ENCODE measurements at regions of chr22 and their contacts with region 1.

Region 1: GRCh38 chr22:23922651-23923320 is 28.6 kb downstream of the MIF start:
- DNase-seq: no peak
- H3K4me3 ChIP-seq: no peak overlapping the region
- H3K27ac ChIP-seq: no peak overlapping the region
- H3K4me1 ChIP-seq: no peaks in the 10 kb centered on the region
- H3K27me3 ChIP-seq: no peaks in the 10 kb centered on the region
- CTCF ChIP-seq: no peak
- EP300 ChIP-seq: no peak
- POLR2A ChIP-seq: no peak

Region 2: GRCh38 chr22:23655891-23656475 is 266.8 kb before region 1 on chr22:
- in situ Hi-C with region 1: no loop called
- intact Hi-C with region 1: no loop called
- DNase-seq: no peak
- H3K4me3 ChIP-seq: no peak overlapping the region
- H3K27ac ChIP-seq: no peak overlapping the region
- H3K4me1 ChIP-seq: no peaks in the 10 kb centered on the region
- H3K27me3 ChIP-seq: no peaks in the 10 kb centered on the region
- CTCF ChIP-seq: no peak
- EP300 ChIP-seq: no peak
- POLR2A ChIP-seq: no peak

Region 3: GRCh38 chr22:23878219-23878618 is 44.6 kb before region 1 on chr22:
- in situ Hi-C with region 1: no loop called
- intact Hi-C with region 1: no loop called
- DNase-seq: no peak
- H3K4me3 ChIP-seq: no peak overlapping the region
- H3K27ac ChIP-seq: no peak overlapping the region
- H3K4me1 ChIP-seq: no peaks in the 10 kb centered on the region
- H3K27me3 ChIP-seq: no peaks in the 10 kb centered on the region
- CTCF ChIP-seq: no peak
- EP300 ChIP-seq: no peak
- POLR2A ChIP-seq: no peak

Region 4: DNA sequence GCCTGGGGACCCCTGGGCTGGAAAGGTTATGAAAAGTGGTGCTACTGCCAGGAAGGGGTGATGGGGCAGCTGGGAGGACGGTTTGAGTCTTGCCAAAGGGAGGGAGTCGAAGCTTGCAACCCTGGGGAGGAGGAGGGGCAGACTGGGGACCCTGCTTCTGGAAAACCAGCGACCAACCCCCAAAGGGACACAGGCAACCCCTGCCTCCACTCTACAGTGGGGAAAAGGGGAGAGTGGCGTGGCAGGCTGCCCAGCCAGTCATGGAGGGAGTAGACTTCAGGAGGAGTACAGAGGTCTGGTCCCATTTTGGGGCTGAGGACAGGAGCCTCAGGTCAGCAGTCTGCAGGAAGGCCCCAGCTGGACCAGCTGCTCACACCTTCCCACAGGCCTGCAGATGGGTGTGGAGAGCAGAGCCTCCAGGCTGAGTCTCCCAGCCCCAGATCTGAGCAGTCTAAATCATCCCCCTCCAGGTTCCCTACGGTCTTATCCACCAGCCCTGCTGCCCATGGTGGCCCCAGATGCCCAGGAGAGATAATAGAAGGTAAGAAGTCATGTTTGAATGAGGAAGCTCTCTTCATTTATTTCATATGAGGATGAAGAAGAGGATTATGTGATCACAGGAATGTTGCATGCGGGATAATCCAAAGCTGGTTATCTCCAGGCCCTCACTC is 48.2 kb after region 1 on chr22:
- in situ Hi-C with region 1: loop called in 1 of 4 experiments (anchors 10 kb)
- intact Hi-C with region 1: loop called (anchors 5 kb)
- DNase-seq: no peak
- H3K4me3 ChIP-seq: no peak overlapping the region
- H3K27ac ChIP-seq: no peak overlapping the region
- H3K4me1 ChIP-seq: no peaks in the 10 kb centered on the region
- H3K27me3 ChIP-seq: no peaks in the 10 kb centered on the region
- CTCF ChIP-seq: no peak
- EP300 ChIP-seq: no peak
- POLR2A ChIP-seq: no peak

Region 5: GRCh38 chr22:24067587-24068376 is 145.0 kb after region 1 on chr22:
- in situ Hi-C with region 1: no loop called
- intact Hi-C with region 1: no loop called
- DNase-seq: peak; percentile 53
- H3K4me3 ChIP-seq: no peak overlapping the region
- H3K27ac ChIP-seq: peak overlapping the region in 1 of 4 donors; percentile 6
- H3K4me1 ChIP-seq: peaks cover 0 to 22% (median 8%) of the 10 kb centered on the region in 4 donors
- H3K27me3 ChIP-seq: no peaks in the 10 kb centered on the region
- CTCF ChIP-seq: no peak
- EP300 ChIP-seq: no peak
- POLR2A ChIP-seq: no peak

Measured in transverse colon (tissue), 4 donors.